ENCODE measurements at regions of chr10 and their contacts with region 1.

Region 1: GRCh38 chr10:113007032-113007771 is 57.2 kb downstream of the TCF7L2 start:
- DNase-seq: peak in 8 of 9 donors; percentile 21 to 82 (median 72)
- ATAC-seq: peak; percentile 93
- H3K4me3 ChIP-seq: peak overlapping the region; percentile 44
- H3K4me3 Mint-ChIP-seq: peak overlapping the region; percentile 63 to 89 (median 80)
- H3K27ac ChIP-seq: no peak overlapping the region
- H3K27ac Mint-ChIP-seq: peak overlapping the region in 5 of 9 donors; percentile 17 to 81 (median 41)
- H3K4me1 ChIP-seq: peaks cover 25 to 34% of the 10 kb centered on the region in 2 donors
- H3K4me1 Mint-ChIP-seq: peaks cover 15 to 38% (median 29%) of the 10 kb centered on the region in 7 donors
- H3K27me3 ChIP-seq: peaks cover 0 to 6% of the 10 kb centered on the region in 2 donors
- H3K27me3 Mint-ChIP-seq: peaks cover 32 to 85% (median 56%) of the 10 kb centered on the region in 5 donors

Region 2: DNA sequence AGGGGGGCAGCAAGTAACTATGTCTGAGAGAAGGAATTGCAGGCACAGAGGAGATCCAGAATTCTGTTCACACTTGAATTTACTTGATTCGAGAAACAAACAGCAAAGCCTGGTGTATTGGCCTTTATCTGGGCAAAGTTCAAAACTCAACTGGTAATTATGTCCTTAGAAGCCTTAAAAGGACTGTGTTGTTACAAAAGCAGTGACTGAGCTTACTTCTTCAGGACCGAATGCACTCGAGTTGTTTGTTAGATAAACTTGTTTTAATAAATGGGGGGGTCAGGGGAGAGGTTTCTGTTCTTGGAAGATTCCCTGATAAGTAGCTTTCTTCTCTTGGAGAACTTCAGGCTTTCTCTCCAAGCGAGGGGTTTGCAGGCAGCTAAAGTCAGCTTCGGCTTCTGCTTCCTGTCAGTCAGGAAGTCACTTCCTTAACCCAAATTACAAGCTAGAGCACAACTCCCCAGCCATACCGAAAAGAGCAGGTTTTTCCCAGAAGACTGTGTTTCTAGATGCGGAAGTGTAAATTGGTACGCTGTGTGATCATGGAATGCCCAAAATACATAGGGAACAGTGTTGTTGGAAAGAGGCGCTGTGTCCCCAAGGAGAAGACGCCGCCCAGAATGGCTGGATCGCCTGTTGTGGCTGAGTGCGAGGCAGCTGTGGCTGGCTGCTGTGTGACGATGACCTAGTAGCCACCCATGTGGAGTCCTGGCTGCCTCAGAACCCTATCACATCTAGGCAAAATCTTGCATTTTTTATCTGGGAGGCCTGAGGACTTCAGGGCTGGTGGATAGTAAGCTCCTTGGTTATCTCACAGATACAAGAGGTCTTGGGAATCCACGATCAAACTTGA is 53.2 kb after region 1 on chr10:
- CTCF ChIA-PET with region 1: no interaction called
- POLR2A ChIA-PET with region 1: no interaction called
- intact Hi-C with region 1: loop called in 1 of 2 experiments (anchors 5 kb)
- DNase-seq: peak in 3 of 9 donors; percentile 9 to 15 (median 14)
- ATAC-seq: no peak
- H3K4me3 ChIP-seq: no peak overlapping the region
- H3K4me3 Mint-ChIP-seq: no peak overlapping the region
- H3K27ac ChIP-seq: no peak overlapping the region
- H3K27ac Mint-ChIP-seq: no peak overlapping the region
- H3K4me1 ChIP-seq: peaks cover 0 to 15% of the 10 kb centered on the region in 2 donors
- H3K4me1 Mint-ChIP-seq: peaks cover 0 to 8% (median 2%) of the 10 kb centered on the region in 7 donors
- H3K27me3 ChIP-seq: no peaks in the 10 kb centered on the region
- H3K27me3 Mint-ChIP-seq: peaks cover 0 to 10% (median 0%) of the 10 kb centered on the region in 5 donors